ENCODE measurements at regions of chr17 and their contacts with region 1.

Region 1: DNA sequence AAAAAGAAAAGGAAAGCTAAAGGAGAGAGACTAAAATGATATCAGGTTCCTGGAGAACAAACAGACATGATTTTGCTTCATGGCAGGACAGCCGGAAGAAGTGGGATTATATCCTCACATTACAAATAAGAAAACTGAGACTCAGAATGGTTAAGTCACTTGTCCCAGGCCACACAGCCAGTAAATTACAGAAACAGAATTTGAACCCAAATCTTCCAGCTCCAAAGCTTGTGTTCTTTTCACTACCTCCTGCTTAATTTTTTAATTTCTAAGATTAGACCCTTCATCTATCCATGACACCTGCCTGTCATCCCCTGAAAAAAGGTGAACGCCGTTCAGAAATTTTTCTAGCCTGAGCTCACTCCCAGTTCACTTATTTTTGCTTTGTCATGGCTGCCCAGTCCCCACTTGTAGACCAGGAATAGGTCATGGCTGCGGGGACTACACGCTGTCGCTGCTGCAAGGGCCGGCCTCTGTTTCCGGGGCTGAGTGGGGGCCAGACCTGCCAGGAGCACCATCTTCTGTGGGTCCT is 36.1 kb downstream of the MAPT start:
- DNase-seq: no peak
- H3K4me3 ChIP-seq: no peak overlapping the region
- H3K27ac ChIP-seq: no peak overlapping the region
- H3K27me3 ChIP-seq: peaks cover 11% of the 10 kb centered on the region
- CTCF ChIP-seq: no peak

Region 2: GRCh38 chr17:45889579-45889978 is 40.9 kb before region 1 on chr17:
- CTCF ChIA-PET with region 1: no interaction called
- POLR2A ChIA-PET with region 1: no interaction called
- DNase-seq: no peak
- H3K4me3 ChIP-seq: no peak overlapping the region
- H3K27ac ChIP-seq: no peak overlapping the region
- H3K27me3 ChIP-seq: peaks cover under 1% of the 10 kb centered on the region
- CTCF ChIP-seq: peak; percentile 10; the same call in 1 of the 2 replicates

Region 3: GRCh38 chr17:45914047-45914717 is 16.3 kb before region 1 on chr17:
- CTCF ChIA-PET with region 1: no interaction called
- POLR2A ChIA-PET with region 1: no interaction called
- DNase-seq: no peak
- H3K4me3 ChIP-seq: no peak overlapping the region
- H3K27ac ChIP-seq: no peak overlapping the region
- H3K27me3 ChIP-seq: peaks cover 4% of the 10 kb centered on the region
- CTCF ChIP-seq: no peak

Region 4: DNA sequence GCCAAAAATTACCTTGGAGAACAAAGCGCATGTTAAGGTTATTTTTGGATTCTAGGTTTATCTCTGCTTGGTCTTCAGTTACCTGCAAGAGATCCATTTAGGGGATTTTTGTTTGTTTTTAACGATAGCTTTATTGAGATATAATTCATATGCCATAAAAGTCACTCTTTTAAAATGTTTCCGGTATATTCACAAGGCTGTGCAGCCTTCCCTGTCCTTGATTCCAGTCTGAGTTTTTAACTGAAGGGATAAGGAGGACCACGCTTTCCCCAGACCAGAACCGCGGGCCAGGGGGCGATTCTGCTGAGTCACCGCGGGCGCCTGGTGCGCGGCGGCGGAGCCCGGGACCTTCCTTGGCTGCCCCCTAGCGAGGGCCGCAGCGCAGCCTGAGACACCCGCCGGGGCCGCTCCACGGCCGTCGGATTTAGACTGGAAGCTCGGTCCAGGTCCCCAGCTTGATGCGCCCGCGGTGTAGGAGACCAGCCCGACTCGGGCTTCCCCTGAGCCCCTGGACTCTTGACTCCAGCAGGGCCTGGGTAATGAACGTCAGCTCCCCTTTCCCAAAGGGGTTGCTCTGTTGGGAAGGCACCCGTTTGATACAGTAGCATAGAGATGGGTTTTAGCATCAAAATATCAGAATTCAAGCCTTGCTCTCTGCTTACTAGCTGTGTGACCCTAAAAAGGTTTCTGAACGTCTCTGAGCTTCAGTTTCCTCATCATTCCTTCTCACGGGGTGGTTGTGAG is 18.6 kb after region 1 on chr17:
- CTCF ChIA-PET with region 1: interaction called, 11 read pairs
- POLR2A ChIA-PET with region 1: no interaction called
- DNase-seq: peak; percentile 4
- H3K4me3 ChIP-seq: peak overlapping the region; percentile 25; the same call in 1 of the 2 replicates
- H3K27ac ChIP-seq: no peak overlapping the region
- H3K27me3 ChIP-seq: peaks cover 35% of the 10 kb centered on the region
- CTCF ChIP-seq: peak; percentile 83

Region 5: DNA sequence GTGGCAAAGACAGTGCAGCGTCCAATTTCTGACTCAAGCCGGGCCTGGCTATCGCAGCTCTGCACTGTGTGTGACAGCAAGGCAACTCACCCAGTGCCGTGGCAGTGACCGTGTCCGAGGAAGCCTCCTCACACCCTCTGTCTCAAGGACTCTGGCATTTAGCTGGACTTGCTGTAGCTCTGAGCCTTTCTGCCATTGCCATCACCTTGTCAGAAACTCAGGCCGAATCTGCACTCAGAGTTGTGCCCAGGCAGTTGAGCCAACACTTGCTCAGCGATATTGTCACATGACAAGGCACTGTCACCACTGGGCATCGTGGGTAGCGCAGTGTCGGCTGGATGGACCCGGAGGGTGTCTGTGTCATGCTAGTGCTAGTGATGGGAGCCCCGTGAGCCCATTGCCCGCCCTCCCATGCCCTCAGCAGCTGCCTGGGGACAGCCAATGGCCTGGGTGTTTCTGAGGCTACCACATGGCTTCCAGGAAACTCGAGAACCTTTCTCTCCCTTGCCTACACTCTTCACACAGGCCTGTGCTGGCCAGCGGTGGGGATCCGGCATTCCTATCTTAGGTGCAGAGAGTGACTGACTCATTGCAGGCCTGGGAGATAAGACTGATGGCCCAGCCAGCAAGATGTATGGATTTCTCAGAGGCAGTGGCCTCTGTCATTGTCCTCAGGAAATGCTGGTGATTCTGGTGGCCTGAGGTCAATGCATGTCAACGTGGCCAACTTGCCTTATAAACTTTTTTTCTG is 46.4 kb after region 1 on chr17:
- CTCF ChIA-PET with region 1: no interaction called
- POLR2A ChIA-PET with region 1: no interaction called
- DNase-seq: no peak
- H3K4me3 ChIP-seq: no peak overlapping the region
- H3K27ac ChIP-seq: no peak overlapping the region
- H3K27me3 ChIP-seq: peaks cover 25% of the 10 kb centered on the region
- CTCF ChIP-seq: no peak

Measured in AG04450 (cell line).